Activated CD8-positive, alpha-beta T cell treated with anti-CD3 and anti-CD28 coated beads for 36 hours (primary cell): ENCODE measurements at regions of chr15 and their contacts with region 1.

Region 1: DNA sequence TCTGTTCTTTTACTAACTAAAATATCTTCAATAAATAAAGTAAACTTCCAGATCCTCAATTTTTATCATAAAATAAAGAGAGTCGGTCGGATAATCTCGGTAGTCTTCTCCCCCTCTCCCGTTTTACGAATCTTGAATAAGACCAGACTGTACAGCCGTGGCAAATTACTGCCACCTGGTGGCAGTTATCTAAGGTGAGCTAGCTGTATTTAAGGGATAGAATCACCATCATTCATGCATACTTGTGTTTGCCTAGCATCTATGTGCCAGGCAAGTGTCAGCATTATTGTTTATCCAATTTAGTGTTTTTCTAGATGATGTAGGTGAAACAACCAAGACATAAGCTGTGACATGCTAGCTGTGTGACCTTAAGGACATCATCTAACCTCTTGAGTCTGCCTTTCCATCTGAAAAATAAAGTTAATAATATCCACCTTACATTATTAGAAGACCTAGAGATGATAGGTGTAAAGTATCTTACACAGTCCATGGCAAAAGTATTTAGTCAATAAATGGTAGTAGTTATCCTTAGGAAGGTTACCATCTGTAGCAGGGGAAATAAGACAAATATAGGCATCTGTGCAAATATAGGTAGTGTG is 21.3 kb downstream of the DUT start:
- DNase-seq: peak; percentile 67
- ATAC-seq: peak; percentile 80
- H3K4me3 Mint-ChIP-seq: no peak overlapping the region
- H3K27ac Mint-ChIP-seq: no peak overlapping the region
- H3K4me1 Mint-ChIP-seq: no peaks in the 10 kb centered on the region
- H3K27me3 Mint-ChIP-seq: peaks cover 1% of the 10 kb centered on the region
- CTCF ChIP-seq: peak; percentile 88

Region 2: GRCh38 chr15:47196057-47196456 is 1156.5 kb before region 1 on chr15:
- CTCF ChIA-PET with region 1: no interaction called
- POLR2A ChIA-PET with region 1: no interaction called
- intact Hi-C with region 1: loop called (anchors 10 kb)
- DNase-seq: peak; percentile 57
- ATAC-seq: peak; percentile 66
- H3K4me3 Mint-ChIP-seq: no peak overlapping the region
- H3K27ac Mint-ChIP-seq: no peak overlapping the region
- H3K4me1 Mint-ChIP-seq: no peaks in the 10 kb centered on the region
- H3K27me3 Mint-ChIP-seq: no peaks in the 10 kb centered on the region
- CTCF ChIP-seq: peak; percentile 69

Region 3: GRCh38 chr15:48336940-48337339 is 15.6 kb before region 1 on chr15:
- CTCF ChIA-PET with region 1: interaction called, 42 read pairs
- POLR2A ChIA-PET with region 1: interaction called, 3 read pairs
- intact Hi-C with region 1: no loop called
- DNase-seq: peak; percentile 37
- ATAC-seq: peak; percentile 57
- H3K4me3 Mint-ChIP-seq: peak overlapping the region; percentile 19
- H3K27ac Mint-ChIP-seq: no peak overlapping the region
- H3K4me1 Mint-ChIP-seq: peaks cover 49% of the 10 kb centered on the region
- H3K27me3 Mint-ChIP-seq: no peaks in the 10 kb centered on the region
- CTCF ChIP-seq: peak; percentile 39

Region 4: GRCh38 chr15:48842501-48842900 is 489.9 kb after region 1 on chr15:
- CTCF ChIA-PET with region 1: no interaction called
- POLR2A ChIA-PET with region 1: no interaction called
- intact Hi-C with region 1: no loop called
- DNase-seq: no peak
- ATAC-seq: no peak
- H3K4me3 Mint-ChIP-seq: no peak overlapping the region
- H3K27ac Mint-ChIP-seq: no peak overlapping the region
- H3K4me1 Mint-ChIP-seq: no peaks in the 10 kb centered on the region
- H3K27me3 Mint-ChIP-seq: peaks cover 4% of the 10 kb centered on the region
- CTCF ChIP-seq: no peak